Dendritic cell treated with granulocyte-macrophage colony-stimulating factor and Interleukin-4, amounts not matched to agents 40 ng/mL and 50 ng/mL, for 4 days (primary cell): ENCODE measurements at regions of chr10 and their contacts with region 1.

Region 1: GRCh38 chr10:62620491-62620890 is 184.0 kb upstream of the ADO start:
- H3K4me3 Mint-ChIP-seq: peak overlapping the region; percentile 37
- H3K27ac Mint-ChIP-seq: peak overlapping the region; percentile 94
- H3K4me1 Mint-ChIP-seq: peaks cover 85% of the 10 kb centered on the region
- H3K27me3 Mint-ChIP-seq: no peaks in the 10 kb centered on the region

Region 2: DNA sequence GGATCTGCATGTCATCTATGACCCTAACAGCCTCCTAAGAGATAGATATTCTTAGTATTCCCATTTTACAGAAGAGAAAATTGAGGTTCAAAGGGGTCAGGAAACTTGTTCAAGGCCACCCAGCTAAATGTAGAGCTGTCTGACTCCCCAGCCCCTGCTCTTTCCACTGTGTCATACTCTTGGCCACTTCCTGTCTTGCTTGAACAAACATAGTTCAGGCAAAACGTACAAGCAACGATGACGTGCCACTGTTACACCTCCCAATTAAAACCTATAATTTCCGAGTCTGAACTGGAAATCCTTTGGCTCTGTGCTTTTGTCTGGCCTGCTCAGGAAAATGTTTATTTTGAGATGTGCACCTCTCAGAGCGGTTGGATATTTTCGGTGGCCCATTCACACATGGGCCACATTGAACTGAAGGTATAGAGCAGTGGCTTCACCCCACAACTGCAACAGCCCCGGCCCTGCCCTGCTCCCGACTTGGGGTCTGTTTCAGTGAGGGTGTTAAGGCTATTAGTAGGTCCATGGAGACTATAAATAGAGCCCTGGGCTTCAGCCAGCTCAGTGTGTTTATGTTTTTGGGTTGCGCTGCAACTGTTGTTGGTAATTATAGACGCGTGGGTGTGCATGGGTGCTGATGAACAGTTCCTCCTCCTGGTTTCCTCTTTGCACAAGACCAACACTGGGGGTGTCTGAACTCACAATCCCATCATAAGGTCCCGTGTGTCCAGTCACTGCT is 11.7 kb after region 1 on chr10:
- intact Hi-C with region 1: loop called (anchors 1 kb)
- H3K4me3 Mint-ChIP-seq: no peak overlapping the region
- H3K27ac Mint-ChIP-seq: peak overlapping the region; percentile 95
- H3K4me1 Mint-ChIP-seq: peaks cover 39% of the 10 kb centered on the region
- H3K27me3 Mint-ChIP-seq: no peaks in the 10 kb centered on the region

Region 3: DNA sequence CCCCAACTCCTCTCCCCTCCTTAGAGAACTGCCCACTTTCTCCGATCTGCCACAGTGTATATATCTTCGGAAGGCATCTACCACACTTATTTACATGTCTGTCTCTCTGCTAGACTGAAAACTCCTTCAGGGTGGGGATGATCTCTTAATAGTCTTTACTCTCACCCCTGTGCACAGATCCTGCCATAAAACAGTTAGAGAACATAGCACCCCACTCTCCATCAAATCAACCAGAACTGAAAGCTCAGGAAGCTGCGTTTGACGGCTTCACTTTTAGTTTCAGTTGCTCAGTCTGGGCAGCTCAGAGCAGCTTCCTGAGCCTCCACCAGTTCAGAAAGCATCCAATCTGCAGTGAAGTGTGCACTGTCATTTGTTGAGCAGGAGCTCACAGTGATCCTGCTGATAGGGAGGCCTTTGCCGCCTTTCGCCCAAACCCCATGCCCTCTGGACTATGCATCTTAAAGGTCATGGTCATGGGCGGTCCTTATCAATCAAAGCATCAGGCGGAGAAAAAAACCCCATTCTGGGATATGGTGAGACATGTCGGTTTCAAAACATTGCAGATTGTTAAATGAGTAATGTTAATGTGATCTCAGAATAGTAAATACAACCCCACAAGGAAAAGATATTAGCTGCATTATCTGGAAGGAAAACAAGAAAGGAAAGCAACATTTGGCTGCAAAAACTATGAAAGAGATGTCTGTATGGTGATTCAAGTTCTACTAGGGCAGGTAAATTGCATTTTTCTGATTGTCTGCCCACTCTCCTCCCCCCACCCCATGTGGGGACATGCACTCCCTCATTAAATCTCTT is 17.0 kb after region 1 on chr10:
- intact Hi-C with region 1: loop called (anchors 1 kb)
- H3K4me3 Mint-ChIP-seq: no peak overlapping the region
- H3K27ac Mint-ChIP-seq: no peak overlapping the region
- H3K4me1 Mint-ChIP-seq: peaks cover 19% of the 10 kb centered on the region
- H3K27me3 Mint-ChIP-seq: no peaks in the 10 kb centered on the region